Ovary (tissue), 10 donors: ENCODE measurements at regions of chr7 and their contacts with region 1.

Region 1: DNA sequence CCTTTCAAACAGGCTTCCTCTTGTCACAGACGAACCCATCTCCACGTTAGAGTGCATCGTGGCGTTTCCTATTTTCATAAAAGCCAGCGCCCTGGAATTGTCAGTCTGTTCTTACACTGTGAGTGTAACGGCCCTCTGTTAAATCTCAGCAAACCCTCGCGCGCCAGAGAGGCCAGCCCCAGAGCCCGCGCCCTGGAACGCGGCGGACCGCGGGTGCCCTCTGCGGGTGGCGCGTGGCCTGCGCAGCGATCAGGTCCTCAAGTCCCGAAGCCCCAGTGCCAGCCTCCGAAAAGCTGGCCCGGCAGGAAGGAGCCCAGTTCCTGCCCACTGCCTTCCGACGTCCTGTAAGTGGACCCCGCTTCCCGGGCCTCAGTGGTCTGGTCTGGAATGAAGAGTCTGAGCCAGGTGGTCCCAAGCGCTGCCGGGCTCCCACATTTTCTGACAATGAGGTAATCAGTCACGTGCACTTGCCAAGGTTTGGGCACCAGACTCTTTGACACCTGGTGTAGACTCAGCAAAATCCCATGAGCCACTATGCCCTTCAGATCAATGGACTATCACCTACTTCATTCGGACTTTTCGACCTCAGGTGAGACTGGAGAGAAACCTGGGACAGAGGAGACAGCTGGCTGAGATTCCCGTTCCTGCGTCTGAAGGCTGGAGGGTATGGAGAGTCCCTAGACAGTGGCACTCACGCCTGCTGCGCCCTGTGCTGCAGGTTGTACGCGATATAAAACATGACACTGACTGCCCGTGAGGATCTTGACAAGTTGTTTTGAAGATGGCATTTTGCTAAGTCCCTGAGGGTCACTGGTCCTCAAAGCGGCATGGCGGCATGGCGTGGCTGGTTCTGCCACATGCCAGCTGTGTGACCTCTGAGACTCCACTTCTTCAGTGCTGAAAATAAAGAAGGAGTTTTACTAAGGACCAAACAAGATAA is 109.4 kb upstream of the LANCL2 start:
- DNase-seq: peak; percentile 78 to 91 (median 86)
- H3K4me3 ChIP-seq: peak overlapping the region; percentile 49
- H3K27ac ChIP-seq: peak overlapping the region in 1 of 2 donors; percentile 53
- H3K4me1 ChIP-seq: no peaks in the 10 kb centered on the region
- H3K27me3 ChIP-seq: no peaks in the 10 kb centered on the region
- CTCF ChIP-seq: peak; percentile 87 to 93 (median 90)
- EP300 ChIP-seq: no peak
- POLR2A ChIP-seq: peak; percentile 28

Region 2: GRCh38 chr7:54773472-54774399 is 482.0 kb before region 1 on chr7:
- intact Hi-C with region 1: loop called (anchors 2 to 5 kb)
- DNase-seq: peak; percentile 82 to 88 (median 88)
- H3K4me3 ChIP-seq: peak overlapping the region; percentile 15
- H3K27ac ChIP-seq: no peak overlapping the region
- H3K4me1 ChIP-seq: no peaks in the 10 kb centered on the region
- H3K27me3 ChIP-seq: no peaks in the 10 kb centered on the region
- CTCF ChIP-seq: peak; percentile 64 to 78 (median 70)
- EP300 ChIP-seq: no peak
- POLR2A ChIP-seq: no peak

Region 3: GRCh38 chr7:54778696-54779540 is 476.8 kb before region 1 on chr7:
- intact Hi-C with region 1: loop called (anchors 2 to 5 kb)
- DNase-seq: no peak
- H3K4me3 ChIP-seq: no peak overlapping the region
- H3K27ac ChIP-seq: no peak overlapping the region
- H3K4me1 ChIP-seq: no peaks in the 10 kb centered on the region
- H3K27me3 ChIP-seq: no peaks in the 10 kb centered on the region
- CTCF ChIP-seq: no peak
- EP300 ChIP-seq: no peak
- POLR2A ChIP-seq: no peak

Region 4: GRCh38 chr7:54788664-54789063 is 467.1 kb before region 1 on chr7:
- intact Hi-C with region 1: loop called in 3 of 4 experiments (anchors 1 to 5 kb)
- DNase-seq: peak in 4 of 5 donors; percentile 36 to 57 (median 38)
- H3K4me3 ChIP-seq: no peak overlapping the region
- H3K27ac ChIP-seq: no peak overlapping the region
- H3K4me1 ChIP-seq: peaks cover 2% of the 10 kb centered on the region
- H3K27me3 ChIP-seq: no peaks in the 10 kb centered on the region
- CTCF ChIP-seq: peak; percentile 66 to 77 (median 75)
- EP300 ChIP-seq: no peak
- POLR2A ChIP-seq: no peak

Region 5: DNA sequence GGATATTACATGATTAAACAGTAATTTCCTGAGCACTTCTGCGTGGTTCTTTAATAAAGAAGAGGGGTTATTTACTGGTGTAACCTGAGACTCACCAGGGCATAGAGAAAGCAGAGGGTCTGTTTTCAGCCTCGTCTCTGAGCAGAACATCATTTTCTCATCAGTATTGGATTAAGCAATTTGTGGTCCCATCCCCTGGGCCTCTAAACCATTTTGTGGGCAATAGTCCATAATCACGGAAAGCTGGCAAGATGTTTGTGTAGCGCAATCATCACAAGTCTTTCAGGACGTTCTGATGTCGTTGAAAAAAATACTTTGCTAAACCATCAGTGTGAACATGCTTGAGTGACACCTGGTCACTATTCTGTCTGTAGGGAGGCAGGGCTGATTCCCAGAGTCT is 459.6 kb before region 1 on chr7:
- intact Hi-C with region 1: loop called in 2 of 4 experiments (anchors 5 kb)
- DNase-seq: no peak
- H3K4me3 ChIP-seq: no peak overlapping the region
- H3K27ac ChIP-seq: no peak overlapping the region
- H3K4me1 ChIP-seq: peaks cover 1% of the 10 kb centered on the region
- H3K27me3 ChIP-seq: no peaks in the 10 kb centered on the region
- CTCF ChIP-seq: no peak
- EP300 ChIP-seq: no peak
- POLR2A ChIP-seq: no peak

Region 6: GRCh38 chr7:55018361-55019190 is 237.2 kb before region 1 on chr7 and contains the start of gene EGFR:
- intact Hi-C with region 1: loop called in 3 of 4 experiments (anchors 10 kb)
- DNase-seq: peak; percentile 83 to 88 (median 85)
- H3K4me3 ChIP-seq: peak within 1 kb of the TSS; percentile 78
- H3K27ac ChIP-seq: peak within 1 kb of the TSS; percentile 84 to 88
- H3K4me1 ChIP-seq: peaks cover 4% of the 10 kb centered on the region
- H3K27me3 ChIP-seq: no peaks in the 10 kb centered on the region
- CTCF ChIP-seq: no peak
- EP300 ChIP-seq: no peak
- POLR2A ChIP-seq: peak; percentile 86
- total RNA-seq, gene EGFR: 26.3 to 54.6 (median 45.4) TPM

Region 7: GRCh38 chr7:55185941-55186609 is 69.7 kb before region 1 on chr7:
- intact Hi-C with region 1: loop called in 1 of 4 experiments (anchors 10 kb)
- DNase-seq: no peak
- H3K4me3 ChIP-seq: no peak overlapping the region
- H3K27ac ChIP-seq: no peak overlapping the region
- H3K4me1 ChIP-seq: peaks cover 23% of the 10 kb centered on the region
- H3K27me3 ChIP-seq: no peaks in the 10 kb centered on the region
- CTCF ChIP-seq: no peak
- EP300 ChIP-seq: no peak
- POLR2A ChIP-seq: no peak